T-cell (primary cell): ENCODE measurements at regions of chr18 and their contacts with region 1.

Region 1: GRCh38 chr18:13221869-13222855 is 3.6 kb downstream of the LDLRAD4 start:
- DNase-seq: no peak
- ATAC-seq: no peak
- H3K4me3 ChIP-seq: no peak overlapping the region
- H3K4me3 Mint-ChIP-seq: peak overlapping the region in 1 of 3 donors; percentile 19
- H3K27ac ChIP-seq: no peak overlapping the region
- H3K27ac Mint-ChIP-seq: peak overlapping the region in 1 of 2 donors; percentile 19
- H3K4me1 ChIP-seq: peaks cover 22 to 29% of the 10 kb centered on the region in 2 experiments
- H3K4me1 Mint-ChIP-seq: peaks cover 31 to 46% (median 35%) of the 10 kb centered on the region in 3 donors
- H3K27me3 ChIP-seq: peaks cover 0 to 9% of the 10 kb centered on the region in 2 experiments
- H3K27me3 Mint-ChIP-seq: peaks cover 0 to 8% of the 10 kb centered on the region in 2 donors

Region 2: GRCh38 chr18:12711446-12711845 is 510.7 kb before region 1 on chr18:
- CTCF ChIA-PET with region 1: no interaction called
- POLR2A ChIA-PET with region 1: interaction called in 1 of 2 experiments, 14 read pairs
- DNase-seq: no peak
- ATAC-seq: no peak
- H3K4me3 ChIP-seq: no peak overlapping the region
- H3K4me3 Mint-ChIP-seq: no peak overlapping the region
- H3K27ac ChIP-seq: no peak overlapping the region
- H3K27ac Mint-ChIP-seq: no peak overlapping the region
- H3K4me1 ChIP-seq: no peaks in the 10 kb centered on the region
- H3K4me1 Mint-ChIP-seq: peaks cover 0 to 19% (median 15%) of the 10 kb centered on the region in 3 donors
- H3K27me3 ChIP-seq: peaks cover 0 to 3% of the 10 kb centered on the region in 2 experiments
- H3K27me3 Mint-ChIP-seq: no peaks in the 10 kb centered on the region

Region 3: GRCh38 chr18:13191779-13192178 is 30.4 kb before region 1 on chr18:
- CTCF ChIA-PET with region 1: no interaction called
- POLR2A ChIA-PET with region 1: no interaction called
- DNase-seq: no peak
- ATAC-seq: no peak
- H3K4me3 ChIP-seq: no peak overlapping the region
- H3K4me3 Mint-ChIP-seq: no peak overlapping the region
- H3K27ac ChIP-seq: no peak overlapping the region
- H3K27ac Mint-ChIP-seq: no peak overlapping the region
- H3K4me1 ChIP-seq: no peaks in the 10 kb centered on the region
- H3K4me1 Mint-ChIP-seq: no peaks in the 10 kb centered on the region
- H3K27me3 ChIP-seq: no peaks in the 10 kb centered on the region
- H3K27me3 Mint-ChIP-seq: peaks cover 1 to 3% of the 10 kb centered on the region in 2 donors

Region 4: DNA sequence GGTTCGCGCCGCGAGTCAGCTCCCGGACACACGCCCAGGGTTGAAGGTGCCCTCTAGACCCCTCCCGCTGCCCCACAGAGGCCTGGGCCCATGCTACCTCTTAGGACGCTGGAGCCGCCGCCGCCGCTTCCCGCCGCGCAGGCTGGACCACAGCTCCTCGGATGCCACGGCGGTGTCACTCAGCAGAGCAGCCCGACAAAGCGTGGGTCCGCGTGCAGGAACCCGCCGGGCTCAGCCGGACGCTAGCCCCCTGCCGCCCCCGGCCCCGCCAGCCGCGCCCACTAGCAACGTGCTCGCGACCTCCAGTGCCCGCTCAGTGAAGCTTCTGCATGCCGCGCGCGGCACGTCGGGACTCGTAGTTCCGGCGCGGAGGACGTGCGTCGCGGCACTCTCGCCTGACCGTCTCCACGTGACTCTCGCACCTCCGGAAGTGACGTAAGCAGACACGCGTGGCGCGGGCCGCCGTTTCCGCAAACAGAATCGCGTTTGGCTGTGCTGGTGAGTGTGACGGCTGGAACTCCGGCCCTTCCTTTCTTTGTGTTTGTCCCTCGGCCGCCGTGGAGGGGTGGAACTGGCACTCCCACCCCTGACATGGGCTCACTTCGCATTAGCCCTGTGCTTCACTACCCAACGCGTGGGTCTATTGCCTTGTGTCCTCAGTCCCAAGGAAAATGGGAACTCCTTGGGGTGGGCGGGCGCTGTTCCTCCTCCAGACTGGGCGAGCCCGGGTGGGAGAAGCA is 504.2 kb after region 1 on chr18 and contains the starts of genes FAM210A and RNMT:
- CTCF ChIA-PET with region 1: no interaction called
- POLR2A ChIA-PET with region 1: interaction called in 1 of 2 experiments, 16 read pairs
- DNase-seq: peak; percentile 80 to 98 (median 93)
- ATAC-seq: peak; percentile 96 to 97 (median 96)
- H3K4me3 ChIP-seq: peak within 1 kb of the TSS; percentile 65 to 91
- H3K4me3 Mint-ChIP-seq: peak within 1 kb of the TSS; percentile 85 to 95 (median 86)
- H3K27ac ChIP-seq: peak within 1 kb of the TSS; percentile 81
- H3K27ac Mint-ChIP-seq: peak within 1 kb of the TSS; percentile 89 to 97
- H3K4me1 ChIP-seq: peaks cover 16 to 24% of the 10 kb centered on the region in 2 experiments
- H3K4me1 Mint-ChIP-seq: peaks cover 60 to 68% (median 60%) of the 10 kb centered on the region in 3 donors
- H3K27me3 ChIP-seq: no peaks in the 10 kb centered on the region
- H3K27me3 Mint-ChIP-seq: no peaks in the 10 kb centered on the region
- total RNA-seq, gene FAM210A: 7.3 to 10.8 (median 9.1) TPM
- total RNA-seq, gene RNMT: 36.4 to 88.4 (median 48.7) TPM